GM18951 (cell line): ENCODE measurements at regions of chr9 and their contacts with region 1.

Region 1: GRCh38 chr9:99184475-99185347 is 37.0 kb downstream of the ALG2 start:
- POLR2A ChIP-seq: no peak

Region 2: DNA sequence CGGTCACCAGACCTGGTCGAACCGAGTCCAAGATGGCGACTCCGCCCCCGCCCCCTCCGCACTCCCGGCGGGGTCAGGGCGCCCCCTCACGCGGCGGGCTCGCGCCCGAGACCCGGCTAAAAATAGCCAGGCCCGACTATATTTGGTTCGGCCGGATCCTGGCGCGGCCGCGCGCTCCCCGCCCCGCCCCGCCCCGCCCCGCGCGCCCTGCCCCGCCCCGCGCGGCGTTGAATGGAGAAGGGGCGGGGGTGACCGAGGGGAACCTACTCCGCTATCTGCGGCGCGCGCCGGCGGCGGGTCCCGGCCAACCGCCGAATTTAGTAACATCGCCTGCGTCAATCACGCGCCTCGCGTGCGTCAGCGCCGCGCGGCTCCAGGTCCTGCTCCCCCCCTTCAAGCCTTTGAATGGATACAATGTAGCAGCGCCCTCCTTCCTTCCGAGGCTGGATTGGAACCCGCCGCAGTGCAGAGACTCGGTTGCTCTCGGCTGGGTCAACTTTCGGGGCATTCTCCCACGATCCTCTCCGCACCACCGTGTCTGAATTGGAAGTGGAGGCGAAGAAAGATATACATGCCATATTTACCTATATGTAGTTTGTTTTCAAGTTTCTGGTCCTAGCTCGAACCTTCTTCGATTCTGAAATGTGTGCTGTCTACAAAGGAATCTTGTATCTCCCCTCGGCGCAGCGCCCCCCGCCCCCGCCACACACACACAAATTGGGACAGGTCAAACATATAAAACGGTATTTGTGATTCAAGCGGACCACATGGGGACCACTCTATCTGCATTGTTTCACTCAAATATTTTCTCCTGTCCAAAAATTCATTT is 635.4 kb after region 1 on chr9:
- in situ Hi-C with region 1: loop called (anchors 25 kb)
- POLR2A ChIP-seq: no peak

Region 3: DNA sequence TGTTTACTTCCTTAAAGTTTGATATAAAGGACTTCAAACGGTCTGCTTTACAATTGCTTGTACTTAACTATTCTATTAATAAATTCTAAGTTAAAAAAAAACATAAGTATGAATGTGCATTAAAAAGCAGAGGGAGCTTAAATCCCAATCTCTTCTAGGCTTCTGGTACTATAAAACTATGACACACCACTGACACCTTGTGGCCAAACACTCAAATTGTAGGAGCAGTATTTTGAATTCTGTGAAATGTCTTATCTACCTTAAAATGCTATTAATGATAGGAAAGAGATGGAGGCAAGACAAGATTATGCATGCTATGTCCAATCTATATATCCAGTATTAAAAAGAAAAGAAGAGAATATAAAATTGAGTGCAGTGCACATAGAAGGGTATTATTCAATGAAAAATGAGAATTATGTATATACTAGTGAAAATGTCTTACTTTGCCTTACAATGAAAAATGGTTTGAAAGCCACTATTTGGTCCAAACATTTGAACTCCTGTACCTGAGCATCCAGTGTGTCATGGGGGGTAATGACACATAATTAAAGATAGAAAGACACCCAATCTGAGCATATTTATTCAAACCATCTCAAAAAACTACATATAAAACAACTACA is 826.5 kb after region 1 on chr9:
- in situ Hi-C with region 1: loop called (anchors 25 kb)
- POLR2A ChIP-seq: no peak